ENCODE measurements at regions of chr14 and their contacts with region 1.

Region 1: GRCh38 chr14:75709207-75709812 is 48.3 kb downstream of the TTLL5 start:
- DNase-seq: peak; percentile 67
- ATAC-seq: peak; percentile 47
- H3K4me3 ChIP-seq: no peak overlapping the region
- H3K27ac ChIP-seq: no peak overlapping the region
- H3K4me1 ChIP-seq: peaks cover 25% of the 10 kb centered on the region
- H3K27me3 ChIP-seq: no peaks in the 10 kb centered on the region
- CTCF ChIP-seq: peak; percentile 78
- EP300 ChIP-seq: no peak
- POLR2A ChIP-seq: no peak
- RAD21 ChIP-seq: peak; percentile 49; the same call in 1 of the 2 replicates

Region 2: GRCh38 chr14:75165586-75166391 is 543.5 kb before region 1 on chr14:
- CTCF ChIA-PET with region 1: no interaction called
- POLR2A ChIA-PET with region 1: no interaction called
- in situ Hi-C with region 1: no loop called
- intact Hi-C with region 1: no loop called
- DNase-seq: no peak
- ATAC-seq: no peak
- H3K4me3 ChIP-seq: no peak overlapping the region
- H3K27ac ChIP-seq: no peak overlapping the region
- H3K4me1 ChIP-seq: peaks cover 47% of the 10 kb centered on the region
- H3K27me3 ChIP-seq: no peaks in the 10 kb centered on the region
- CTCF ChIP-seq: no peak
- EP300 ChIP-seq: no peak
- POLR2A ChIP-seq: no peak
- RAD21 ChIP-seq: no peak

Region 3: GRCh38 chr14:75794615-75795038 is 85.3 kb after region 1 on chr14:
- CTCF ChIA-PET with region 1: interaction called, 3 read pairs
- POLR2A ChIA-PET with region 1: no interaction called
- in situ Hi-C with region 1: no loop called
- intact Hi-C with region 1: loop called (anchors 5 kb)
- DNase-seq: peak; percentile 9
- ATAC-seq: peak; percentile 53
- H3K4me3 ChIP-seq: no peak overlapping the region
- H3K27ac ChIP-seq: no peak overlapping the region
- H3K4me1 ChIP-seq: no peaks in the 10 kb centered on the region
- H3K27me3 ChIP-seq: no peaks in the 10 kb centered on the region
- CTCF ChIP-seq: peak; percentile 47
- EP300 ChIP-seq: no peak
- POLR2A ChIP-seq: no peak
- RAD21 ChIP-seq: no peak

Region 4: GRCh38 chr14:75861161-75861621 is 151.9 kb after region 1 on chr14:
- CTCF ChIA-PET with region 1: no interaction called
- POLR2A ChIA-PET with region 1: no interaction called
- in situ Hi-C with region 1: no loop called
- intact Hi-C with region 1: loop called (anchors 10 kb)
- DNase-seq: peak; percentile 80
- ATAC-seq: peak; percentile 98
- H3K4me3 ChIP-seq: no peak overlapping the region; a peak in 1 of 6 replicates
- H3K27ac ChIP-seq: peak overlapping the region; percentile 31
- H3K4me1 ChIP-seq: peaks cover 31% of the 10 kb centered on the region
- H3K27me3 ChIP-seq: no peaks in the 10 kb centered on the region
- CTCF ChIP-seq: no peak
- EP300 ChIP-seq: peak in 1 of 2 experiments; percentile 35; a peak in 1 of 4 replicates
- POLR2A ChIP-seq: no peak
- RAD21 ChIP-seq: no peak

Region 5: DNA sequence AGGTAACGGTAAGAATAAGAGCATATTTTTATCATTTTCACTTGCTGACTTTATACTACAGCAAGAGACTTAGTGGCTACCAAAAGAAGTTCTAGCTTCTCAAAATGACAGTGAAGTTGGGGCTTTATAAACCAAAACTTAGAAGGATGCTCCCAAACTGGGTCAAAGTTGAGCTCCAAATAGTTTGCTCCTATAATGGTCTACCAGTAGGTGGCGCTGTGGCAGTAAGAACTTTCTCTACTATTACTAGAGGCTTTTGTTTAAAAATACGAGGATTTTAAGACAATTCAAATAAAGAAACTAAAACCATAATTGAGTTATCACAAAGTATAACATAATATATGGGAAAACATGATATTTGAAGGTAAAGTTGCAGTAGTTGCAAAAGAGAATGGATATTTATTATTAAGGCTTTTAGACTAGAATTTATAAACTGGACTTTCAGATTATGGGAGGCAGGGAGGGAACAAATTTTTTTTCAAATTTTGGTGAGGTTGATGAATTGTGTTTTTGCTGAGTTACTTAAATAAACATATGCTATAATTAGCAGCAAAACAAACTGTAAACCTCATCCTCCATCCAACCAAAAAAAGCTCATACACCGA is 197.5 kb after region 1 on chr14:
- CTCF ChIA-PET with region 1: no interaction called
- POLR2A ChIA-PET with region 1: no interaction called
- in situ Hi-C with region 1: no loop called
- intact Hi-C with region 1: loop called (anchors 5 kb)
- DNase-seq: peak; percentile 36
- ATAC-seq: no peak
- H3K4me3 ChIP-seq: no peak overlapping the region
- H3K27ac ChIP-seq: no peak overlapping the region
- H3K4me1 ChIP-seq: no peaks in the 10 kb centered on the region
- H3K27me3 ChIP-seq: no peaks in the 10 kb centered on the region
- CTCF ChIP-seq: peak; percentile 65
- EP300 ChIP-seq: no peak
- POLR2A ChIP-seq: no peak
- RAD21 ChIP-seq: peak; percentile 24; the same call in 1 of the 2 replicates

Measured in HepG2 (cell line).